ENCODE measurements at regions of chr15 and their contacts with region 1.

Region 1: GRCh38 chr15:40379853-40380252 is 2.7 kb upstream of the KNSTRN start:
- DNase-seq: peak in 1 of 3 donors; percentile 75
- ATAC-seq: peak; percentile 62 to 72
- H3K4me3 ChIP-seq: no peak overlapping the region
- H3K27ac ChIP-seq: peak overlapping the region; percentile 78
- H3K4me1 ChIP-seq: no peaks in the 10 kb centered on the region
- H3K27me3 ChIP-seq: no peaks in the 10 kb centered on the region

Region 2: DNA sequence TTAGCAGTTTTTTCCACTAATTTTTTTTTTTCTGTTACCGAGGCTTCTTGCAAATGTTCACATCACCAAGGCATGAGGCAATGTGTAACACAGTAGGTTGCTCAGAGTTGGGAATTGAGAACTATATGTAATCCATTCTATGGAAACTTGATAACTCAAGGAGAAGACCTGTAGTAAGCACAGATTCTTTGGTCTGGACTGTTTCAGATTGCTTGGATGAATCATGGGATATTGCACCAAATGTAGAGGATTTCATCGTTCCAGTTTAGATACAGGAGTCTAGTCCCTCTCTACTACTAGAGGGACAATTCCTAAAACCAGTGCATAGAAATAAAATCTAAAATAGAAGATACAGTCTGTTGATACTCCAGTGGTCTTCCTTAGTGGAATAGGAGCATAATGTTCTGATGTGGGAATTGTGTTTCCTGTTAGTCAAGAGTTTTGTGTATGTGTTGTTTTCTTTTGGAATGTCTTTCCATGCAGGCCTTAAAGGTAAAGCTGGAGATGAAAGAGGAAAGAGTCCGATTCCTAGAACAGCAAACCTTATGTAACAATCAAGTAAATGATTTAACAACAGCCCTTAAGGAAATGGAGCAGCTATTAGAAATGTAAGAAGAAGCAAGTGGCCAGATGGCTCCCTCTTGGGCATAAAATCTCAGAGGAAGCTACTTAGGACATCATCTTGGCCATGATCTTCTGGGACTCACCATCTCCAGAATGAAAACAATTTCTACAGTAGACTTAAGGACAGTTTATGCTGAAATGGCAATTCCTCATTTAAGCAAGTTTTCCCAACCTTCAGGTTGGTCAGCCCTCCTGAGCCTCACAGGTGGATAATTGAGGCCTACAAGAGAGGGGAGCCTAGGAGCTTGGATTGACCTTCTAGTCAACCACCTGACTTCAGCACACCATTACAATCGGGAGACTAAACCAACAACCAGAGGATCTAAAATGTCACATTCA is 13.4 kb after region 1 on chr15:
- intact Hi-C with region 1: loop called in 1 of 4 experiments (anchors 2 kb)
- DNase-seq: no peak
- ATAC-seq: no peak
- H3K4me3 ChIP-seq: no peak overlapping the region
- H3K27ac ChIP-seq: no peak overlapping the region
- H3K4me1 ChIP-seq: peaks cover 2% of the 10 kb centered on the region
- H3K27me3 ChIP-seq: no peaks in the 10 kb centered on the region